Breast epithelium (tissue), 4 donors: ENCODE measurements at regions of chr11 and their contacts with region 1.

Region 1: DNA sequence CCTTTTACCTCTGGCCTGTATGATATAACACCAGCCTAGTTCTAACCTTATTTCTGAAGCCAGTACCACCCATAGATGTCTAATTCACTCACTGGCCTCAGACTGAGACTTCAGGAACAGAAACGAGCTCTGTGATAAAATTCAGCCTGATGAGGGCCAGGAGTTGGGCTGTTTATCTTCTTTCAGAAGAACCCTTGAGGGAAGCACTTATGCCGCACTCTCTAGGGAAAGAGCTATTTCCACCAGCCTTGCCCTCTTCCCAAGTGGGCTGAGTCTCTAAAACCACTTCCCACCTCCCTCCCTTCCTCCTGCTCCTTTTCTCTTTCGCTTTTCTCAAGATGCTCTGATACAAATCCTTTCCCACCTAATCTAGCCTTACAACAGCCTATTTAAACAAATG is 2.0 kb upstream of the OR52B4 start:
- DNase-seq: no peak
- H3K4me3 ChIP-seq: no peak overlapping the region
- H3K27ac ChIP-seq: no peak overlapping the region
- H3K4me1 ChIP-seq: no peaks in the 10 kb centered on the region
- H3K27me3 ChIP-seq: no peaks in the 10 kb centered on the region
- CTCF ChIP-seq: no peak
- POLR2A ChIP-seq: no peak

Region 2: DNA sequence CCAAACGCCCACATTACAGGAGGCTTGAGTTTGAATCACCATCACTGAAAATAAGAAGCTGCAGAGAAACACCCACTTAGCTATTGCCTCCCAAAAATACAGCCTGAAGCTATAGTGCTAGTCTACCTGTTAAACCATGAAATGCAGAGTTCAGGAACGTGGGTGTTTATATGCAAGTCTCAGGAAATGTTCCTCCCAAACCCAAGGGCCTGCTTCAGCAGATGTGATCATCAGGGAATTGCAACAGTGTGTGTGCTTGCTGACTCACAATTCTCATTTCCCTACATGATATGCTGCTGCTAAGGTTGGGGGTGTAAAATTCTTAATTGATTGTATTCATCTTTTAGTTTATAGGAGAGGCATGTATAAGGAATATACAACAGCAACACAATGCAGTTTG is 622.5 kb before region 1 on chr11:
- intact Hi-C with region 1: no loop called
- DNase-seq: no peak
- H3K4me3 ChIP-seq: no peak overlapping the region
- H3K27ac ChIP-seq: no peak overlapping the region
- H3K4me1 ChIP-seq: no peaks in the 10 kb centered on the region
- H3K27me3 ChIP-seq: no peaks in the 10 kb centered on the region
- CTCF ChIP-seq: no peak
- POLR2A ChIP-seq: no peak

Region 3: DNA sequence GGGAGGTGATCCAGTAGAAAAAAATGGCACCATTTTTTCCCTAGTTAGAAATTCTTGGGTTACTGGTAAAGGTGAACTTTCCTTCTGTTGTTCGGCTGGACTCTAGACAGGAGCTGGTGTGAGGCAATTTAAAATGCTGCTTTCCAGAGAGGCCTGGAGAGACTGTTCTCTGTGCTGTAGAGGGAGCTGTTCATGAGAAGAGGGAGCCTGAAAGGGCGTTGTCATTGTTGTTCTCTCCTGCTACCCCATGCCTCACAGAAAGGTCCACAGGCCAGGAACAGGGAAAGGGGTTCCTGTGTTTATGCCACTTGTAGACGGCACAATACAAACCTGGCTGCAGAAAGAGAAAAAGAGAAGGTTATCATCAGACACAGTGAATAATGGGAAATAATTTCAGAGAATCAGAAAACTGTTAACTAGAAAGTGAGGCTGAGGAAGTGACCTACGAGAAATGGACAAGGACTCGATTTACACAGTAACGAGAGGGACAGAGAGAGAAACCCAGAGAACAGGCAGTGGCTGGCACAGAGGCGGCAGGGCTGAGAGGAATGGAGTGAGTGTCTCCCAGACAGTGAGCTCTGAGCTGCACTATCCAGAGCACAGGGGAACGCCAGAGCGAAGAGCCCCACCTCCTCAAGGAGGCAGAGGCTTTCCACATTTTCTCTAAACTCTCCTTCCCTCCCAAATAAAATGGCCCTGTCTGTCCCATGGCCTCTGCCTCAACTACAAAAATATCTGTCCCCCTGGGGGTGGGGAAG is 166.4 kb before region 1 on chr11:
- intact Hi-C with region 1: no loop called
- DNase-seq: no peak
- H3K4me3 ChIP-seq: no peak overlapping the region
- H3K27ac ChIP-seq: no peak overlapping the region
- H3K4me1 ChIP-seq: no peaks in the 10 kb centered on the region
- H3K27me3 ChIP-seq: no peaks in the 10 kb centered on the region
- CTCF ChIP-seq: no peak
- POLR2A ChIP-seq: no peak

Region 4: GRCh38 chr11:4381901-4382300 is 11.7 kb after region 1 on chr11:
- intact Hi-C with region 1: no loop called
- DNase-seq: no peak
- H3K4me3 ChIP-seq: no peak overlapping the region
- H3K27ac ChIP-seq: no peak overlapping the region
- H3K4me1 ChIP-seq: no peaks in the 10 kb centered on the region
- H3K27me3 ChIP-seq: no peaks in the 10 kb centered on the region
- CTCF ChIP-seq: no peak
- POLR2A ChIP-seq: no peak

Region 5: GRCh38 chr11:4418403-4418802 is 48.2 kb after region 1 on chr11:
- intact Hi-C with region 1: no loop called
- DNase-seq: no peak
- H3K4me3 ChIP-seq: no peak overlapping the region
- H3K27ac ChIP-seq: no peak overlapping the region
- H3K4me1 ChIP-seq: no peaks in the 10 kb centered on the region
- H3K27me3 ChIP-seq: no peaks in the 10 kb centered on the region
- CTCF ChIP-seq: no peak
- POLR2A ChIP-seq: no peak

Region 6: DNA sequence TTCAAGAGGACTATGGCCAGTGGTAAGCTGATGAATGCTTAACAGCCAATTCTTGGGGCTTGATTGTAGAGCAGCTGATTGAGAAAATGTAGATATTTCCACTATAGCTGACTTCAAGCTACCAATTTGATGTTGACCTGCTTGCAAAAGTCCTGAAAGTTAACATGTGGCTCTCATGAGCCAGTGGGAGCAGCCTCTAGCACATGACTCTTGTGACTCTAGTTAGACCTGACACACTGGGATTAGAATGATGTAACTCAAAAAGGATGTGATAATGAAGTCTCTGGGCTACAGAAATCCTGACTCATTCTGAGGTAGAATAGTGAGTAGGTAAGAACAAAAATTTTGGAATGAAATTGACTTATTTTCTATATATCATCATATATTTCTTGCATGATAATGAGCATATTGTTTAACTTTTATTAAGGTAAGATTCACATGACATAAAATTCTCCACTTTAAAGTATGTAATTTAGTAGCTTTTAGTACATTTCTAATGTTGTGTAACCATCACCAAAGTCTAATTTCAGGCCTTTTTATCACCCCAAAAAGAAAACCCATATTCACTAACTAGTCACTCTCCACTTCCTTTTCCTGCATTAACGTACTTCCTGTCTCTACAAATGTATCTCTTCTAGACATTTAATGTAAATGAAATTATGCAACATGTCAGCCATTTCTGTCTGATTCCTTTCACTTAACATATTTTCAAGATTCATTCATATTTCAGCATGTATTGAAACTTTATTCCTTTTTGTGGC is 1194.3 kb after region 1 on chr11:
- intact Hi-C with region 1: loop called (anchors 5 kb)
- DNase-seq: no peak
- H3K4me3 ChIP-seq: no peak overlapping the region
- H3K27ac ChIP-seq: no peak overlapping the region
- H3K4me1 ChIP-seq: no peaks in the 10 kb centered on the region
- H3K27me3 ChIP-seq: no peaks in the 10 kb centered on the region
- CTCF ChIP-seq: no peak
- POLR2A ChIP-seq: no peak